ENCODE measurements at regions of chr20 and their contacts with region 1.

Region 1: GRCh38 chr20:57383447-57384347 is 7.5 kb upstream of the RBM38 start:
- DNase-seq: no peak
- ATAC-seq: no peak
- H3K4me3 ChIP-seq: no peak overlapping the region
- H3K27ac ChIP-seq: no peak overlapping the region
- H3K4me1 ChIP-seq: peaks cover 0 to 17% (median 13%) of the 10 kb centered on the region in 12 donors
- H3K27me3 ChIP-seq: no peaks in the 10 kb centered on the region
- CTCF ChIP-seq: no peak
- POLR2A ChIP-seq: no peak

Region 2: GRCh38 chr20:57493091-57493615 is 109.5 kb after region 1 on chr20:
- intact Hi-C with region 1: loop called (anchors 1 to 2 kb)
- DNase-seq: no peak
- ATAC-seq: peak in 1 of 4 donors; percentile 15
- H3K4me3 ChIP-seq: no peak overlapping the region
- H3K27ac ChIP-seq: peak overlapping the region in 2 of 12 donors; percentile 18 to 43
- H3K4me1 ChIP-seq: peaks cover 0 to 16% (median 6%) of the 10 kb centered on the region in 12 donors
- H3K27me3 ChIP-seq: peaks cover 0 to 12% (median 0%) of the 10 kb centered on the region in 9 donors
- CTCF ChIP-seq: no peak
- POLR2A ChIP-seq: no peak

Region 3: GRCh38 chr20:57498425-57499400 is 115.0 kb after region 1 on chr20:
- intact Hi-C with region 1: loop called (anchors 1 to 2 kb)
- DNase-seq: peak in 1 of 5 donors; percentile 49
- ATAC-seq: peak in 3 of 4 donors; percentile 53 to 73 (median 69)
- H3K4me3 ChIP-seq: no peak overlapping the region
- H3K27ac ChIP-seq: no peak overlapping the region
- H3K4me1 ChIP-seq: peaks cover 0 to 30% (median 8%) of the 10 kb centered on the region in 12 donors
- H3K27me3 ChIP-seq: peaks cover 0 to 37% (median 0%) of the 10 kb centered on the region in 9 donors
- CTCF ChIP-seq: peak in 7 of 12 donors; percentile 5 to 35 (median 21)
- POLR2A ChIP-seq: no peak

Region 4: GRCh38 chr20:57609861-57610205 is 226.1 kb after region 1 on chr20:
- intact Hi-C with region 1: no loop called
- DNase-seq: no peak
- ATAC-seq: no peak
- H3K4me3 ChIP-seq: no peak overlapping the region
- H3K27ac ChIP-seq: no peak overlapping the region
- H3K4me1 ChIP-seq: no peaks in the 10 kb centered on the region
- H3K27me3 ChIP-seq: peaks cover 0 to 26% (median 4%) of the 10 kb centered on the region in 9 donors
- CTCF ChIP-seq: no peak
- POLR2A ChIP-seq: no peak

Measured in heart left ventricle (tissue), 16 donors.